Activated T-helper 1 cell treated with anti-CD3 and anti-CD28 coated beads, Interleukin-12 subunit alpha, Interleukin-12 subunit beta, Interleukin-2, Interleukin-4 antibody, amounts not matched to agents 30 ng/mL and 10 ng/mL and 1 ng/mL, durations not matched to agents 14 hours and 24 hours and 36 hours (primary cell): ENCODE measurements at regions of chrX and their contacts with region 1.

Region 1: GRCh38 chrX:1537035-1537715 is at the start of gene P2RY8:
- DNase-seq: peak; percentile 74
- H3K4me3 Mint-ChIP-seq: peak within 1 kb of the TSS; percentile 89
- H3K27ac Mint-ChIP-seq: peak within 1 kb of the TSS; percentile 99
- H3K4me1 Mint-ChIP-seq: peaks cover 16% of the 10 kb centered on the region
- H3K27me3 Mint-ChIP-seq: no peaks in the 10 kb centered on the region
- total RNA-seq, gene P2RY8: 20.4 and 21.8 TPM in 2 replicates

Region 2: DNA sequence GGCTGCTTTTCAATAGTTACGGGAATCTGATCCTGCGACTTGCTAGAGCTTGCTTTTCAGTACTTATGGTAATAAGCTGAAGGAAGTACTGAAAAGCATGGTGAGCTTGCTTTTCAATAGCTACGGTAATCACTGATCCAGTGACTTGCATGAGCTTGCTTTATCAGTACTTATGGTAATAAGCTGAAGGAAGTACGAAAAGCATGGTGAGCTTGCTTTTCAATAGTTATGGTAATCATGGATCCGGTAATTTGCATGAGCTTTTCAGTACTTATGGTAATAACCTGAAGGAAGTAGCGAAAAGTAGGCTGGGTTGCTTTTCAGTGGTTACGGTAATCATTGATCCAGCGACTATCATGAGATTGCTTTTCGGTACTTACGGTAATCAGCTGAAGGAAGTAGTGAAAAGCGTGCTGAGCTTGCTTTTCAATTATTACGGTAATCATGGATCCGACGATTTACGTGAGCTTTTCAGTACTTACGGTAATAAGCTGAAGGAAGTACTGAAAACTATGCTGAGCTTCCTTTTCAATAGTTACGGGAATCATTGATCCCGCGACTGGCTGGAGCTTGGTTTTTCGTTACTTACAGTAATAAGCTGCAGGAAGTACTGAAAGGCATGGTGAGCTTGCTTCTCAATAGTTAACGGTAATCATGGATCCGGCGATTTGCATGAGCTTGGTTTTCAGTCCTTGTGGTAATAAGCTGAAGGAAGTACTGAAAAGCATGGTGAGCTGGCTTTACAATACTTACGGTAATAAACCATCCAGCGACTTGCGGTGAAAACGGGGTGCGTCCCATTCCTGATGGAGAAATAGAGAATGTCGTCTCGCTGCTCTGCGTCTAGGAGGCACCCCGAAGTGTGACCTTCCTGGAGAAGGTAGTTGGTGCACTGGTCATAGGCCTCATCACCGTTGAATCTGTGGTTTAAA is 331.2 kb before region 1 on chrX:
- intact Hi-C with region 1: loop called (anchors 2 kb)
- DNase-seq: peak; percentile 32
- H3K4me3 Mint-ChIP-seq: peak overlapping the region; percentile 57
- H3K27ac Mint-ChIP-seq: no peak overlapping the region
- H3K4me1 Mint-ChIP-seq: peaks cover 31% of the 10 kb centered on the region
- H3K27me3 Mint-ChIP-seq: peaks cover 1% of the 10 kb centered on the region

Region 3: GRCh38 chrX:1453951-1454785 is 83.0 kb before region 1 on chrX:
- intact Hi-C with region 1: loop called (anchors 1 kb)
- DNase-seq: peak; percentile 82
- H3K4me3 Mint-ChIP-seq: peak overlapping the region; percentile 68
- H3K27ac Mint-ChIP-seq: peak overlapping the region; percentile 36
- H3K4me1 Mint-ChIP-seq: peaks cover 13% of the 10 kb centered on the region
- H3K27me3 Mint-ChIP-seq: no peaks in the 10 kb centered on the region

Region 4: GRCh38 chrX:1481636-1482529 is 55.3 kb before region 1 on chrX:
- intact Hi-C with region 1: loop called (anchors 1 kb)
- DNase-seq: peak; percentile 78
- H3K4me3 Mint-ChIP-seq: peak overlapping the region; percentile 85
- H3K27ac Mint-ChIP-seq: peak overlapping the region; percentile 99
- H3K4me1 Mint-ChIP-seq: peaks cover 66% of the 10 kb centered on the region
- H3K27me3 Mint-ChIP-seq: no peaks in the 10 kb centered on the region

Region 5: GRCh38 chrX:1580735-1581531 is 43.8 kb after region 1 on chrX:
- intact Hi-C with region 1: loop called (anchors 1 kb)
- DNase-seq: peak; percentile 66
- H3K4me3 Mint-ChIP-seq: no peak overlapping the region
- H3K27ac Mint-ChIP-seq: no peak overlapping the region
- H3K4me1 Mint-ChIP-seq: peaks cover 19% of the 10 kb centered on the region
- H3K27me3 Mint-ChIP-seq: no peaks in the 10 kb centered on the region

Region 6: GRCh38 chrX:2696698-2697215 is 1159.6 kb after region 1 on chrX:
- intact Hi-C with region 1: loop called (anchors 2 kb)
- DNase-seq: peak; percentile 63
- H3K4me3 Mint-ChIP-seq: peak overlapping the region; percentile 99
- H3K27ac Mint-ChIP-seq: peak overlapping the region; percentile 99
- H3K4me1 Mint-ChIP-seq: peaks cover 86% of the 10 kb centered on the region
- H3K27me3 Mint-ChIP-seq: no peaks in the 10 kb centered on the region